ENCODE measurements at regions of chr12 and their contacts with region 1.

Region 1: DNA sequence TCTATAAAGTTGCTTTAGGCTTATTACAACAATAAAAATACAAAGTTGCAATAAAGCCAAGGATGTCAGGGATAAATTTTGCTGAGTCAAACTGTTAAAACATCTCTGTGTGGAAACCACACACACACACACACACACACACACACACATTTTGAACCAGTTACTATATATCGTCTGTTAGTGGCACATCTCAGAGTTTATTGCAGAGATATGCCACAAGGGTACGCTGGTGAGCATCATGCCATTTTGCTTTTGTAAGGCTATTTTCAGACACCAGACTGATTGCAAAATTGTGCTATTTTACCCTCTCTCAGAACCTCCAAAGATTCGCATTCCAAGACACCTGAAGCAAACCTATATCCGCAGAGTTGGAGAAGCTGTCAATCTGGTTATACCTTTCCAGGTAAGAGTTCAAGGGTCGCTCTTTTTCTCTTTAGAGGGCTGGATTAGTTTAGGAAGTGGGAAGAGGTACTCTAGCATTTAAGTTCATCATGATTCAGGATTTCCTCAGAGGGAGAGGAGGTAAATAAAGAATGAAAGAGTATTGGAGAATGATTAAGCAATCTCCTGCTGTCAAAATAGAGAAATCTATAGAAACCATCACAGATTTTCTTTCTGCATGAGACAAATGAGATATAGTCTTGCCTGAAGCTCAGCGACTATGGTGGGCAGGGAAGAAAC is 27.3 kb upstream of the CHPT1 start:
- DNase-seq: peak; percentile 75
- H3K4me3 ChIP-seq: no peak overlapping the region
- H3K27ac ChIP-seq: no peak overlapping the region
- H3K4me1 ChIP-seq: peaks cover 25% of the 10 kb centered on the region
- CTCF ChIP-seq: peak; percentile 79

Region 2: DNA sequence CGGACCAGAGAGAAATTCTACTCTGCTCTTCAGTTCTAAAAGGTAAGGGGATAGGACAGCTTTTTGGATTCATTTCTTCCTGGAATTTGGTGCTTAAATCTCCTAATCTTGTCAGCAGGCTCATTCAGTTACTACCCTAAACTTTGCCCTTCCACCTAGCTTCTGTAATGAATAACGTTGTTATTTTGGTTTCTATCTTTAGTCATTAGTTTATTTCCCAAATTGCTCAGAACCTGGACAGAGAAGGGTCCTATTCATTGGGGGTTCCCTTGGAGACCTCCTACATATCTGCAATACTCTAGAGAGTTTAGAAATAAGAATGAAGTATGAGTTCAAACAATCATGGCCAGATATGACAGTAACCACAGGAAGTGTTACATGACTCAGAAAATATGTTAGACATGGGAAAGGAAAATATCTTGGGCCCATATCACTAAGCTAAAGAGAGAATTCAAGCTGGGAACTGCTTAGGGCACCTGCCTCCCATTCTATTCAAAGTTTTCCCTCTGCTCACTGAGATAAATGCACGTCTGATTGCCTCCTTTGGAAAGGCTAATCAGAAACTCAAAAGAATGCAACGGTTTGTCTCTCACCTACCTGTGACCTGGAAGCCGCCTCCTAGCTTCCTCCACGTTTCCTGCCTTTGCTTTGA is 1008.7 kb before region 1 on chr12:
- CTCF ChIA-PET with region 1: no interaction called
- POLR2A ChIA-PET with region 1: no interaction called
- intact Hi-C with region 1: no loop called
- DNase-seq: no peak
- H3K4me3 ChIP-seq: no peak overlapping the region
- H3K27ac ChIP-seq: no peak overlapping the region
- H3K4me1 ChIP-seq: no peaks in the 10 kb centered on the region
- CTCF ChIP-seq: no peak

Region 3: DNA sequence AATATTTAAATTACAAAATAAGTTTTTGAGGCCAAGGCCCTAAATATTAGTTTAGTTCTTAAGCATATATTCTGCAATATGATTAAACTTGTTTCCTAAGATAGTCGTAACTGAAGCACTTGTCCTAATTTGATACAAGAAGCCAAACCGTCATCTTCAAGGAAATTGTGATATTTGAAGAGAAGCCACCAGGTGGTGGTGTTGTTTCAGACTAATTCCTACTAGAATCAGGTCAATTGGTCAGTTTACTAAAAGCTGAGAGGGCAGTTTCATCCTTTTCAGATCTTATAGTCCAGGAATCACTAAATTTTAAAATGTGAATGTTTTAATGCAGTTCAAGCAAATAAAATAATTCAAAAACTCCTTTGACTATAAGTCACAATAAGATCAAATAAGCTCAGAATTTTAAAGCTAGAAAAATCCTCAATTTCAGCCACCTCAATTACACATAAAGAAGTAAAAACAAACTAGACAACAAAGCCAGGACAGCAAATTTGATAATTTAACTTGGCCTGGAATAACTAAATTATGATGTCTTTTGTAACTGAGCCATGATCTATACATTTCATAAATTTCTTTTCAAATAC is 255.5 kb before region 1 on chr12:
- CTCF ChIA-PET with region 1: no interaction called
- POLR2A ChIA-PET with region 1: no interaction called
- intact Hi-C with region 1: loop called (anchors 10 kb)
- DNase-seq: peak; percentile 73
- H3K4me3 ChIP-seq: no peak overlapping the region
- H3K27ac ChIP-seq: no peak overlapping the region
- H3K4me1 ChIP-seq: peaks cover 4% of the 10 kb centered on the region
- CTCF ChIP-seq: peak; percentile 93

Region 4: GRCh38 chr12:101697197-101697929 is 27.2 kb after region 1 on chr12 and contains the start of gene CHPT1:
- CTCF ChIA-PET with region 1: no interaction called
- POLR2A ChIA-PET with region 1: interaction called, 5 read pairs
- intact Hi-C with region 1: loop called (anchors 2 kb)
- DNase-seq: peak; percentile 83
- H3K4me3 ChIP-seq: peak within 1 kb of the TSS; percentile 80
- H3K27ac ChIP-seq: peak within 1 kb of the TSS; percentile 56
- H3K4me1 ChIP-seq: peaks cover 45% of the 10 kb centered on the region
- CTCF ChIP-seq: no peak
- total RNA-seq, gene CHPT1: 33.6 and 56.6 TPM in 2 replicates

Region 5: GRCh38 chr12:101891462-101892273 is 221.5 kb after region 1 on chr12:
- CTCF ChIA-PET with region 1: no interaction called
- POLR2A ChIA-PET with region 1: no interaction called
- intact Hi-C with region 1: no loop called
- DNase-seq: no peak
- H3K4me3 ChIP-seq: no peak overlapping the region
- H3K27ac ChIP-seq: no peak overlapping the region
- H3K4me1 ChIP-seq: peaks cover 8% of the 10 kb centered on the region
- CTCF ChIP-seq: no peak

Region 6: DNA sequence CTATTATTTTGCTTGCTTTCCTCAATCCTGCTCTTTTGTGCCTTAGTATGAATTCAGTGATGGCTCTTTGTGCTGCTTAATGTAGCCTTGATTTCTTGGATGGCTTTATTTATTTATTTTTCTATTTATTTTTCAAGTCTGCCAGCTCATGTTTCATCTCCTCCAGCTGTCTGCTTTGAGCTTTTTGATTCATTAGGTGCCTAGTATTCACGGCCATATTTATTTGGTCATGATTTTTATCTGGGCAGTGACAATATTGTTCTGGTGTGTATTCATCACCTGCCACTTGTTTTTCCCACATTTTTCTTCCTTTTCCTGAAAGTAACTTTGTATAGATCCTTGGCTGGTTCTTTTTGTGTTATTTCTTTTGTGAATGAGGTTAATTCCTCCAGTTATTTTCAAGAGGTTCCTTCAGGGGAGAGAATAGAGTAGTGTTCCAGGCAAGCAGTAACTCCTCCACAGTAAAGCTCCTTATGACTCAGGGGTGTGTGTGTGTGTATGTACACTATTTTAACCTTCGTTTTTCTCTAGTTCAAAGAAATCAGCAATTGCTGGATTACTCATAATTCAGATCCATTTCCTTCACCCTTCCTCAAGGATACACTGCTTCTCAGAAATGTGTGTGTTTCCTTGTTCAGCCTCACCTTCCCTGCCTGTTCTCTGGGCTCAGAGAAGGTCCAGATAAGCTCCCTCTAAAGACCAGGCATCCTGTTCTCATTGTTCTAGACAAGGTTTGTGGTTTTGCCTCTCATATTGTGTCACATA is 579.1 kb after region 1 on chr12:
- CTCF ChIA-PET with region 1: no interaction called
- POLR2A ChIA-PET with region 1: no interaction called
- intact Hi-C with region 1: no loop called
- DNase-seq: no peak
- H3K4me3 ChIP-seq: no peak overlapping the region
- H3K27ac ChIP-seq: no peak overlapping the region
- H3K4me1 ChIP-seq: no peaks in the 10 kb centered on the region
- CTCF ChIP-seq: no peak